HepG2 (cell line): ENCODE measurements at regions of chr6 and their contacts with region 1.

Region 1: DNA sequence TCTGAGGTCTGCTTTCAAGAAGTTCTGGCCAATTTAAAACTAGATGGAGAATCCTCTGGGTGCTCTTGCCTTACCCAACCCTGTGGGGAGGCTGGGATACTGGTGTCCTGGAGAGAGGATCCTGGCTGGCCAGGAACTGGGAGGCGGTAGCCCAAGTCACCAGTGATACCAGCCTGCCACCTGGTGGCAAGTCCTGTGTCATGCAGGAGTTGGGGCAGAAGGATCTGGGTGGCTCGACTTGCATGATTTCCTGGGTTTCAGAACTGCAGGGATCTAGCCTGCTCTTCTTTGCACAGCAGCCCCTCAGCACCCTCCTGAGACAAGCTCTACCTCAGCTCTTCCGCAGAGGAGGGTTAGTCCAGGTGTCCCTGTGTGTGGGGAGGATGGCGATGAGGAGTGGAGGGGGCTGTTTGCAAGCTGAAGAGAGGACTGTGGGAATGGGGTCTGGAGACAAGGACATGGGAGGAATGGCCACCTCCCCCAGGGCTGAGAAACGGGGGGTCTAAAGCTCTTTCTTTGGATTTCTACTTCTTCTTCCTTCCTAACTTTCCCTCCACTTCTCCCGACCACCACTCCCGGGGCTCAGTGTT is 4.2 kb downstream of the KCNK17 start:
- DNase-seq: peak; percentile 58
- ATAC-seq: peak; percentile 88
- H3K4me3 ChIP-seq: no peak overlapping the region
- H3K27ac ChIP-seq: no peak overlapping the region
- H3K4me1 ChIP-seq: no peaks in the 10 kb centered on the region
- H3K27me3 ChIP-seq: peaks cover 6 to 37% of the 10 kb centered on the region in 2 experiments; a peak in 4 of 5 replicates
- CTCF ChIP-seq: peak; percentile 95
- EP300 ChIP-seq: no peak
- POLR2A ChIP-seq: no peak
- RAD21 ChIP-seq: peak; percentile 91

Region 2: GRCh38 chr6:38871741-38872568 is 438.1 kb before region 1 on chr6:
- CTCF ChIA-PET with region 1: interaction called, 16 read pairs
- POLR2A ChIA-PET with region 1: no interaction called
- in situ Hi-C with region 1: loop called (anchors 5 kb)
- intact Hi-C with region 1: no loop called
- DNase-seq: peak; percentile 41
- ATAC-seq: peak; percentile 80
- H3K4me3 ChIP-seq: no peak overlapping the region
- H3K27ac ChIP-seq: no peak overlapping the region
- H3K4me1 ChIP-seq: no peaks in the 10 kb centered on the region
- H3K27me3 ChIP-seq: no peaks in the 10 kb centered on the region
- CTCF ChIP-seq: peak; percentile 92
- EP300 ChIP-seq: no peak
- POLR2A ChIP-seq: no peak
- RAD21 ChIP-seq: peak; percentile 69

Region 3: GRCh38 chr6:38973178-38974054 is 336.6 kb before region 1 on chr6:
- CTCF ChIA-PET with region 1: no interaction called
- POLR2A ChIA-PET with region 1: no interaction called
- in situ Hi-C with region 1: no loop called
- intact Hi-C with region 1: loop called (anchors 1 kb)
- DNase-seq: peak; percentile 72
- ATAC-seq: peak; percentile 96
- H3K4me3 ChIP-seq: no peak overlapping the region
- H3K27ac ChIP-seq: no peak overlapping the region
- H3K4me1 ChIP-seq: no peaks in the 10 kb centered on the region
- H3K27me3 ChIP-seq: no peaks in the 10 kb centered on the region
- CTCF ChIP-seq: peak; percentile 62
- EP300 ChIP-seq: no peak
- POLR2A ChIP-seq: no peak
- RAD21 ChIP-seq: no peak

Region 4: DNA sequence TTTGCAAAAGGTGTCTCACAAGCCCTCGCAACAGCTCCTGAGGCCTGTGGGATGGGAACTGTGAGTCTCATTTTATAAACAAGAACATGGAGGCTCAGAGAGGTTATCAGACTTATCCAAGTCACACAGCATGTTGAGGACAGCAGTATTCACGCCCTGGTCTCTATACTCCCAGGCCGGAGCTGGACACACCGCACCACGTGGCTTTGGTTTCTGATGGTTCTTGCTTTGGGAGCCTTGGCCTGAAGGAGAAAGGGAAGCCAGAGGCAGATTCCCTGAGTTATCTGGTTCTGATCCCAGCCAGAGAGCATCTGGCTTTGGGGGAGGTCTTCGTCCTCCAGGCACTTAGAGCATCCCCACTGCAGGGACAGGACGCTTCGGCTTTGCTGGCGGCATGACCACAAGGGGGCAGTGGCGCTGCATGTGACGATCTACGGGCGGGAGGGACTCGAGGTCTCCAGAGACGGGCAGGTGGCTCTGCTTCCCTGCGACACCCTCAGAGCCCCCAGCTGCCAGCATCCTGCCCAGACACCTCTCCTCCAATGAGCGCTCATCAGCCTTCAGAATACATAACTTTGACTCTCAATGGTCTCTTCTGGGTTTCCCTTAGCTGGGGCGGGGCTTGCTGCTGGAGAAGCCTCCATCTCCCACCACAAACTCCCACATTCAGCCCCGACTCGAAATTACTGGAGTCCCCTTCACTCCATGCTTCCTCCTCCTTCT is 143.7 kb before region 1 on chr6:
- CTCF ChIA-PET with region 1: interaction called, 28 read pairs
- POLR2A ChIA-PET with region 1: no interaction called
- in situ Hi-C with region 1: no loop called
- intact Hi-C with region 1: loop called (anchors 1 kb)
- DNase-seq: peak; percentile 62
- ATAC-seq: peak; percentile 97
- H3K4me3 ChIP-seq: no peak overlapping the region
- H3K27ac ChIP-seq: no peak overlapping the region
- H3K4me1 ChIP-seq: no peaks in the 10 kb centered on the region
- H3K27me3 ChIP-seq: no peaks in the 10 kb centered on the region
- CTCF ChIP-seq: peak; percentile 97
- EP300 ChIP-seq: no peak
- POLR2A ChIP-seq: no peak
- RAD21 ChIP-seq: peak; percentile 93

Region 5: GRCh38 chr6:39209360-39209811 is 100.7 kb before region 1 on chr6:
- CTCF ChIA-PET with region 1: no interaction called
- POLR2A ChIA-PET with region 1: no interaction called
- in situ Hi-C with region 1: no loop called
- intact Hi-C with region 1: no loop called
- DNase-seq: no peak
- ATAC-seq: no peak
- H3K4me3 ChIP-seq: no peak overlapping the region
- H3K27ac ChIP-seq: no peak overlapping the region
- H3K4me1 ChIP-seq: no peaks in the 10 kb centered on the region
- H3K27me3 ChIP-seq: no peaks in the 10 kb centered on the region; a peak in 1 of 5 replicates
- CTCF ChIP-seq: no peak
- EP300 ChIP-seq: no peak
- POLR2A ChIP-seq: no peak
- RAD21 ChIP-seq: no peak